ENCODE measurements at regions of chr4 and their contacts with region 1.

Region 1: DNA sequence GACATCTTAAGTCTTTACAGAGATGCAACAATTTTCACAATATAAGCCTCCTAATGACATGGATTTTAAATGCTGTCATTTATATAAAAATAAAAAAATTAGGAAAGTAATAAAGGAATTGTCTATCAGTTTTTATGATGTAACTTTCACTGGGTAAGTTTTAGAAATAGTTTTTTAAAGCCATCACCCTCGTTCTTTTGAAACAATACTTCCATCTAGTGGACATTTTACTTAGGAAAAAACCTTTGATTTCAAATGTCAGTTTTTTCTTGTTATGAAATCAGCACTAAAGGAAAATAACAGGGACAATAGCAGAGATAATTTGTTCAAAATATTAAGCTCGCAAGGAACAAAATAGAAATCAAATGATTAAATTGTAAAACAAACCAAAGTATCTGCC is 24.3 kb upstream of the NDNF start:
- DNase-seq: peak; percentile 73
- H3K4me3 ChIP-seq: no peak overlapping the region
- H3K27ac ChIP-seq: peak overlapping the region; percentile 27
- H3K4me1 ChIP-seq: peaks cover 11% of the 10 kb centered on the region
- H3K27me3 ChIP-seq: no peaks in the 10 kb centered on the region

Region 2: GRCh38 chr4:120071192-120071795 is 1025.3 kb before region 1 on chr4:
- in situ Hi-C with region 1: loop called (anchors 10 kb)
- DNase-seq: peak; percentile 73
- H3K4me3 ChIP-seq: no peak overlapping the region
- H3K27ac ChIP-seq: peak overlapping the region; percentile 50; the same call in 1 of the 2 replicates
- H3K4me1 ChIP-seq: peaks cover 34% of the 10 kb centered on the region
- H3K27me3 ChIP-seq: no peaks in the 10 kb centered on the region

Region 3: GRCh38 chr4:120718979-120719566 is 377.6 kb before region 1 on chr4:
- in situ Hi-C with region 1: loop called (anchors 25 kb)
- DNase-seq: peak; percentile 65
- H3K4me3 ChIP-seq: 0 out of 2 replicates have a peak overlapping the region, but pooled peaks have one; percentile 21
- H3K27ac ChIP-seq: no peak overlapping the region
- H3K4me1 ChIP-seq: no peaks in the 10 kb centered on the region
- H3K27me3 ChIP-seq: no peaks in the 10 kb centered on the region

Region 4: DNA sequence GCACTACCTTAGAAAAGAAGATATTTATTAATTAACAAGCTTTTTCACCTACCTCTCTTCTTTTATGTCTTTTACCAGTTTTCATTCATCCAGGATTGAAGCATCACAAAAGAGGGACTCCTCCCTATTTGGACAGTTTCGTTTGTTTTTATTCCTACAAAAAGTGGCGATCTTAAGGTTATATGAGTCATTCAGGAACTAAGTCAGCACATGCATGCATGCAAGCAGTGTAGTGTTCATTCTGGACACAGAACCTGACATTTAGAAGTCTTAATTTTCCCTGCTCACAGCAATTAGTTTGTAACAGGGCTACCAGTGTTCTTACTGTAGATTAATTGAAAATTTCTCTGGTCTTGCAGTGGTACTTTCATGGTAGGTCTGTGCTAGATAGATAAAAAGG is 332.1 kb after region 1 on chr4:
- in situ Hi-C with region 1: no loop called
- DNase-seq: peak; percentile 55
- H3K4me3 ChIP-seq: no peak overlapping the region
- H3K27ac ChIP-seq: no peak overlapping the region
- H3K4me1 ChIP-seq: 0 out of 2 replicates have a peak, but pooled peaks cover 9% of the 10 kb centered on the region
- H3K27me3 ChIP-seq: peaks cover 5% of the 10 kb centered on the region; the same call in 1 of the 2 replicates